ENCODE measurements at regions of chr10 and their contacts with region 1.

Region 1: GRCh38 chr10:52308251-52309031 is 5.6 kb upstream of the DKK1 start:
- DNase-seq: peak; percentile 78
- ATAC-seq: peak; percentile 91
- H3K4me3 ChIP-seq: peak overlapping the region; percentile 53
- H3K27ac ChIP-seq: peak overlapping the region; percentile 51; the same call in 1 of the 2 replicates
- H3K4me1 ChIP-seq: 0 out of 2 replicates have a peak, but pooled peaks cover 3% of the 10 kb centered on the region
- H3K27me3 ChIP-seq: no peaks in the 10 kb centered on the region
- CTCF ChIP-seq: peak; percentile 91
- POLR2A ChIP-seq: peak; percentile 52; the same call in 1 of the 2 replicates
- RAD21 ChIP-seq: peak; percentile 93

Region 2: GRCh38 chr10:51972733-51973346 is 335.6 kb before region 1 on chr10:
- CTCF ChIA-PET with region 1: no interaction called
- POLR2A ChIA-PET with region 1: no interaction called
- dilution Hi-C with region 1: no loop called
- in situ Hi-C with region 1: no loop called
- intact Hi-C with region 1: no loop called
- DNase-seq: peak; percentile 11
- ATAC-seq: no peak; the same call in 1 of the 2 replicates
- H3K4me3 ChIP-seq: no peak overlapping the region
- H3K27ac ChIP-seq: no peak overlapping the region
- H3K4me1 ChIP-seq: no peaks in the 10 kb centered on the region
- H3K27me3 ChIP-seq: no peaks in the 10 kb centered on the region
- CTCF ChIP-seq: no peak
- POLR2A ChIP-seq: no peak
- RAD21 ChIP-seq: no peak

Region 3: DNA sequence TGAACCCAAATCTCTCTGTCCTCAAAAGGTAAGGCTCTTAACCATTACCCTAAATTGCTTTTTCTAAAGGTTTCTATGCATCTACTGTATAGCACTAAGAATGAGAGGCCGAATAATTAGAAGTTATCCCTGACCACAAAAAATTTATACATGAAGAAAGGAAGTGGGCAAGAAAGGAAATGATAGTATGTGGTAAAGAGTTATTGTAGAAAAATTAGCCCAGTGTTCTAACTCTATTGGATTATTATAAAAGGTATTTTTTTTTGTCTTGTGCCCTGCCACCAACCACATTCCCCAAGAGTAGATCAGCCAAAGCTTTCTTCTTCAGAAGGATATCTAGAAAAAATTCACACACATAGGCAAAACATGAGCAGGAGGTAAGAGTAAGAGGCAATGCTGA is 51.0 kb after region 1 on chr10:
- CTCF ChIA-PET with region 1: no interaction called
- POLR2A ChIA-PET with region 1: no interaction called
- dilution Hi-C with region 1: no loop called
- in situ Hi-C with region 1: no loop called
- intact Hi-C with region 1: no loop called
- DNase-seq: peak; percentile 4
- ATAC-seq: no peak
- H3K4me3 ChIP-seq: no peak overlapping the region
- H3K27ac ChIP-seq: no peak overlapping the region
- H3K4me1 ChIP-seq: peaks cover 4% of the 10 kb centered on the region; the same call in 1 of the 2 replicates
- H3K27me3 ChIP-seq: no peaks in the 10 kb centered on the region
- CTCF ChIP-seq: no peak
- POLR2A ChIP-seq: no peak
- RAD21 ChIP-seq: no peak

Region 4: DNA sequence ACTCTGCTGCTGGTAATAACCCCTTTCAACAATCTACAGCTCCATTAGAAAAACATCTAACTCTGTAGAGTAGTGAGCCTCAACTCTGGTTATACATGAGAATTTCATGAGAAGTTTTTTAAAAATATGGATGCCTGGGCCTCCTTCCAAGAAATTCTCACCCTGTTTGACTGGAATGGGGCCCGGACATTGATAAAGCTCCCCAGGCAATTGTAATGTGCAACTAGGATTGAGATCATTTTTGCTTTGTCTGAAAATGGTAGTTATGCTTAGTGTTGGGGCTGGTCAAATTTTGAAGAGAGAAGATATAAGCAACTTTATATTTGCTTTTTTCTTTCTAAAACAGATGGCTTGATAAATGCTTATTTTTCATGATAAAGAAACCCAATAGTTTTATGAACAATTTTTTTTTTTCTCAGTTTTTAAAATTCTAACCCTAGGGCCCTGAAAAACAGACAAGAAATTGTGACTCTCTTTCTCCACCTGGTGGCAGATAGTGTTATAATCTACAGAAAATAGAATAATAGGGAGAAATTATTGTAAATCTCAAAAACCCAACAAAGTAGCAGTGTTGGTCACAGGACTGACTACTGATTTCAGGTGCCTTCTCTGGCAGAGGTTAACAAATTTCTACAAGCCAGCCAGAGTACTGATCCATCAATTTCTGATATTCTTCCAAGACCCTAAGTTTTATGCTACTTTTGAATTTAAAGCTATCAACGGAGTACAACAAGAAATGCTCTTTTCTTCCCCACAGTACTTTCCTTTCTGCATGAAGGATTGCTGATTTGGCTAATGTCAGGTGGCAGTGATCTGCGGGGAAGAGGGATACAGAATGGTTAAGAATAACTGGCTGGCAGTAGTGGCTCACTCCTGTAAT is 180.4 kb after region 1 on chr10:
- CTCF ChIA-PET with region 1: interaction called, 48 read pairs
- POLR2A ChIA-PET with region 1: interaction called, 8 read pairs
- dilution Hi-C with region 1: no loop called
- in situ Hi-C with region 1: loop called (anchors 5 kb)
- intact Hi-C with region 1: loop called (anchors 1 kb)
- DNase-seq: peak; percentile 61
- ATAC-seq: peak; percentile 50
- H3K4me3 ChIP-seq: no peak overlapping the region
- H3K27ac ChIP-seq: peak overlapping the region; percentile 61
- H3K4me1 ChIP-seq: peaks cover 10% of the 10 kb centered on the region
- H3K27me3 ChIP-seq: no peaks in the 10 kb centered on the region
- CTCF ChIP-seq: peak; percentile 72
- POLR2A ChIP-seq: no peak
- RAD21 ChIP-seq: peak; percentile 75

Region 5: DNA sequence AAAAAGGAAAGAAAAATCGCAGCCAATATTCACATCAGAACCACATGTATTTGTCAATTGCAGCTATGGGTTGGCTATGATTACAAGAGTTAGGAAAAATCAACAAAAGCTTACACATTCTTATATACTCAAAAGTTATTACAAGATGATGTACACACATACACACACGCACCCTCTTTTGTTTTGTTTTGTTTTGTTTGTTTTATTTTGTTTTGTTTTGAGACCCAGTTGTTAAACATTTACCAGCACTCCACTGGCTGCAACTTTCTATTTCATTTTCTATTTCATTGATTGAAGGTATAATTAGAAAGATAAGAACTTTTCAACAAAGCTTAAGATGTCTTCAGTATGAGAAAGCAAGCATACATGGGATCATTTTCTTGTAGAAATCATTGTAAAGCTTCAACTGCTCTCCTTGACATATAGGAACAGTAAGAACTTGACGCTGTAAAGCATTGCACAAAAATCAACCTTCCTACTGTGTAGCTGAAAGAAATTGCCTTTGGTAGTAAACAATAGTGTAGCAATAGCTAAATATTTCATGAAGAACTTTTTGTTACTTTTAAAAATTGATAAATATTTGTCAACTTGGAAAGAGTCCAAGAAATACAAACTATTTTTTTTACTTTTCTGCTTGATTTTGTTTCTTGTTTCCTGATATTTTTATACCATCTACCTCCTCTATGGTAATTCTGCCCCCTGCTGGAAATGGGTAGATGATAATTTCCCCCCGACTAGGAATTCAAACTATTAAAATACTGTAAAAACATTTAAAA is 258.2 kb after region 1 on chr10:
- CTCF ChIA-PET with region 1: interaction called, 25 read pairs
- POLR2A ChIA-PET with region 1: no interaction called
- dilution Hi-C with region 1: no loop called
- in situ Hi-C with region 1: loop called (anchors 5 kb)
- intact Hi-C with region 1: loop called (anchors 1 kb)
- DNase-seq: peak; percentile 69
- ATAC-seq: peak; percentile 78
- H3K4me3 ChIP-seq: no peak overlapping the region; the same call in 1 of the 2 replicates
- H3K27ac ChIP-seq: no peak overlapping the region
- H3K4me1 ChIP-seq: peaks cover 3% of the 10 kb centered on the region
- H3K27me3 ChIP-seq: no peaks in the 10 kb centered on the region
- CTCF ChIP-seq: peak; percentile 89
- POLR2A ChIP-seq: no peak
- RAD21 ChIP-seq: peak; percentile 84

Region 6: GRCh38 chr10:52644373-52645186 is 336.1 kb after region 1 on chr10:
- CTCF ChIA-PET with region 1: no interaction called
- POLR2A ChIA-PET with region 1: no interaction called
- dilution Hi-C with region 1: no loop called
- in situ Hi-C with region 1: no loop called
- intact Hi-C with region 1: loop called (anchors 1 kb)
- DNase-seq: peak; percentile 32
- ATAC-seq: peak; percentile 82
- H3K4me3 ChIP-seq: no peak overlapping the region
- H3K27ac ChIP-seq: no peak overlapping the region
- H3K4me1 ChIP-seq: no peaks in the 10 kb centered on the region
- H3K27me3 ChIP-seq: no peaks in the 10 kb centered on the region; the same call in 1 of the 2 replicates
- CTCF ChIP-seq: peak; percentile 75
- POLR2A ChIP-seq: no peak
- RAD21 ChIP-seq: peak; percentile 68

Region 7: GRCh38 chr10:52729271-52730104 is 421.0 kb after region 1 on chr10:
- CTCF ChIA-PET with region 1: interaction called, 4 read pairs
- POLR2A ChIA-PET with region 1: no interaction called
- dilution Hi-C with region 1: no loop called
- in situ Hi-C with region 1: loop called (anchors 10 kb)
- intact Hi-C with region 1: loop called (anchors 1 kb)
- DNase-seq: peak; percentile 43
- ATAC-seq: peak; percentile 82
- H3K4me3 ChIP-seq: no peak overlapping the region
- H3K27ac ChIP-seq: no peak overlapping the region
- H3K4me1 ChIP-seq: no peaks in the 10 kb centered on the region
- H3K27me3 ChIP-seq: no peaks in the 10 kb centered on the region
- CTCF ChIP-seq: peak; percentile 68
- POLR2A ChIP-seq: no peak
- RAD21 ChIP-seq: peak; percentile 66

Region 8: GRCh38 chr10:52779541-52780390 is 471.3 kb after region 1 on chr10:
- CTCF ChIA-PET with region 1: interaction called, 3 read pairs
- POLR2A ChIA-PET with region 1: no interaction called
- dilution Hi-C with region 1: no loop called
- in situ Hi-C with region 1: no loop called
- intact Hi-C with region 1: loop called (anchors 1 kb)
- DNase-seq: peak; percentile 53
- ATAC-seq: peak; percentile 99
- H3K4me3 ChIP-seq: no peak overlapping the region
- H3K27ac ChIP-seq: no peak overlapping the region
- H3K4me1 ChIP-seq: no peaks in the 10 kb centered on the region
- H3K27me3 ChIP-seq: peaks cover 19% of the 10 kb centered on the region
- CTCF ChIP-seq: peak; percentile 92
- POLR2A ChIP-seq: no peak
- RAD21 ChIP-seq: peak; percentile 89

Measured in IMR-90 (cell line).